Prostate gland (tissue), 2 donors: ENCODE measurements at regions of chr2 and their contacts with region 1.

Region 1: DNA sequence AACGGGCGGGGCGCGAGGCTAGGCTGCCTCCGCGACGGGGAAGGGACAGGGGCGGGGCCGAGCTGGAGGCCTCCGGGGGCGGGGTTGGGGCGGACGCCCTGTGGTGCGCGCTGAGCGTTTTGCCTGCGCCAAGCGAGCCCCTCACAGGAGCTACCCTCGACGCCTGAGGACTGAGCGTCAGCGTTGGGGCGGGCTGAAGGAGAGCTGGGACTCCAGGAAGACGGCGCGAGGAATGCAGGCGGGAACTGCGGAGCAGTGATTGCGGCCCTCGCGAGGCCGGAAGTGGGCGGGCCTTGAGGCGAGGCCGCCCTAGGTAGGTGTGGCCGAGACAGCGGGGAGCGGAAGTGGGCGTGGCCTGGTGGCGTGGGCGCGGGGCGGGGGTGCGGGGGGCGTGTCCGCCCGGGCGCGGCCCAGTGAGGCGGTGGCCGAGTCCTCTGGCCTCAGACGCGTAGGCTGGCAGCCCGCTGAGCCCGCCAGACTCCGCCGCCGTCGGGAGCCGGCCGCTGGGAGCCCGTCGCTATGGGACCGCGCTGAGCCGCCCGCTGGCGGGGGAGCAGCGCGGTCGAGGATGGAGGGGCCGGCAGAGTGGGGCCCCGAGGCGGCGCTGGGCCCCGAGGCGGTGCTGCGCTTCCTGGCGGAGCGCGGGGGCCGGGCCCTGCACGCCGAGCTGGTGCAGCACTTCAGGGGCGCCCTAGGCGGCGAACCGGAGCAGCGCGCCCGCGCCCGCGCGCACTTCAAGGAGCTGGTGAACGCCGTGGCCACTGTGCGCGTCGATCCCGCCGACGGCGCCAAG is at the starts of genes SEPTIN10 and SOWAHC:
- DNase-seq: peak; percentile 94
- H3K4me3 ChIP-seq: peak within 1 kb of the TSS; percentile 58 to 98
- H3K27ac ChIP-seq: peak within 1 kb of the TSS; percentile 95 to 99
- H3K4me1 ChIP-seq: no peaks in the 10 kb centered on the region
- H3K27me3 ChIP-seq: no peaks in the 10 kb centered on the region
- CTCF ChIP-seq: peak in 1 of 4 experiments; percentile 16
- POLR2A ChIP-seq: peak; percentile 95
- total RNA-seq, gene SEPTIN10: 66.3 to 94.9 TPM
- total RNA-seq, gene SOWAHC: 20.7 to 24.9 TPM

Region 2: GRCh38 chr2:109545828-109546713 is 68.0 kb before region 1 on chr2:
- intact Hi-C with region 1: loop called (anchors 5 kb)
- DNase-seq: peak; percentile 52
- H3K4me3 ChIP-seq: no peak overlapping the region
- H3K27ac ChIP-seq: no peak overlapping the region
- H3K4me1 ChIP-seq: no peaks in the 10 kb centered on the region
- H3K27me3 ChIP-seq: no peaks in the 10 kb centered on the region
- CTCF ChIP-seq: peak; percentile 72 to 92 (median 84)
- POLR2A ChIP-seq: no peak

Region 3: GRCh38 chr2:109690822-109691547 is 76.9 kb after region 1 on chr2:
- intact Hi-C with region 1: loop called (anchors 2 kb)
- DNase-seq: peak; percentile 94
- H3K4me3 ChIP-seq: no peak overlapping the region
- H3K27ac ChIP-seq: peak overlapping the region; percentile 84 to 87
- H3K4me1 ChIP-seq: peaks cover 23% of the 10 kb centered on the region
- H3K27me3 ChIP-seq: no peaks in the 10 kb centered on the region
- CTCF ChIP-seq: no peak
- POLR2A ChIP-seq: no peak

Region 4: DNA sequence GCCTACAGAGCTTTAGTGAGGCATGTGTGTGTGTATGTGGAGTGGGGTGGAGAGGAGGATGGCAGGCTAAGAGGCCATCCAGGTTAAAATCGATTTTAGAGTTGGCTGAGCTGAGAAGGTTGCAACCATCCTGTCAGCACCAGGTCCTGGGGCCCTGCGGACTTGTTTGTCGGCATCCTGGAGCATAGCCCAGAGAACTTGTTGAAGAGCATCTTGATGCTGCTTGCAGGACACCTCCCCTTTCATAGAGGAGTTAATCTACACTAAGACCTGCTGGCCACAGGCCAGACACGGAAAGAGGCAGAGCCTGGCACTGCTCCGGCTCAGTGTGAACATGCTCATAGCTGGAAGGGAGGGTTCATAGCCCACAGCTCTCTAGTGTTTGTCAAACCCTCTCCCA is 107.9 kb after region 1 on chr2:
- intact Hi-C with region 1: loop called (anchors 10 kb)
- DNase-seq: peak; percentile 59
- H3K4me3 ChIP-seq: no peak overlapping the region
- H3K27ac ChIP-seq: peak overlapping the region; percentile 76 to 77
- H3K4me1 ChIP-seq: peaks cover 12% of the 10 kb centered on the region
- H3K27me3 ChIP-seq: no peaks in the 10 kb centered on the region
- CTCF ChIP-seq: no peak
- POLR2A ChIP-seq: no peak